Ascending aorta (tissue), 2 donors: ENCODE measurements at regions of chr6 and their contacts with region 1.

Region 1: DNA sequence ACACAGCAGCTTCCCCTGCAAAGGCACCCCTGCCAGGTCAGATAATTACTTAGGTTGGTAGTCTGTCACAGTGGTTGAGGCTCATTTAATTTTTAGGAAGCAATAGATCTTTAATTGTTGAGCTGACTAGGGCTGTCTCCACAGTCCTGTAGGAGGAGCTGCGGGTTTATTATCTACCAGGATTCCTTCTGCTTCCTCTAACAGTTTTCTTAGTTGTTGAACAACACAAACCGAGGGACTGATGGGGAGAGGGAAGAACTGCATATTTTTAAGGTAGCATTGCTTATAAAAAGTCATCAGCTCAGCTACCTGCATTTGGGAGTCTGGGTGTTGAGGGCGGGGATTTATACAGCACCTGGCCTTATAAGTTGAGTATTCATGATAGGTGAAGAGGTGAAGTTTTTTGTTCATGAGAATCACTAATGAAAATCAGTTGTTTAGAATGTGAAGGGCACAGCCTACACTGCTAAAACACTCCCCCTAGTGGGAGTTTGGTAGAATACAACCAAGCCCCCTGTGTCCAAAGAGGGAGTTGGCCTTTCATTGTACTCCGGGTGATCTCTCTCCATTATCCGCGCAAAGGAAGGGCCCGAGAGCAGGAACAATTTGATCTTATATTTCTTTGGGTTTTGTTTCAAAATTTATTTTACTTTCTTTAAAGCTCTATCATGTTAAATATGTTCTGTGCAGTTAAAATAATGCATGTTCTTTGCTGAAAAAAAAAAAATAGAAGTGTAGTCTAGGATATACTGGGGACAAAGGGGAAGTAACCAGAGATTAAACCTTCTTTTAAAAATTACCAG is 69.6 kb downstream of the SSR1 start:
- DNase-seq: no peak
- H3K4me3 ChIP-seq: no peak overlapping the region
- H3K27ac ChIP-seq: peak overlapping the region in 1 of 2 donors; percentile 23
- H3K4me1 ChIP-seq: no peaks in the 10 kb centered on the region
- H3K27me3 ChIP-seq: no peaks in the 10 kb centered on the region
- CTCF ChIP-seq: peak; percentile 57 to 87 (median 81)

Region 2: GRCh38 chr6:6676910-6677441 is 566.4 kb before region 1 on chr6:
- intact Hi-C with region 1: loop called (anchors 2 kb)
- DNase-seq: peak in 1 of 2 donors; percentile 85
- H3K4me3 ChIP-seq: no peak overlapping the region
- H3K27ac ChIP-seq: no peak overlapping the region
- H3K4me1 ChIP-seq: no peaks in the 10 kb centered on the region
- H3K27me3 ChIP-seq: no peaks in the 10 kb centered on the region
- CTCF ChIP-seq: peak; percentile 77 to 97 (median 94)

Region 3: GRCh38 chr6:6724539-6725467 is 518.6 kb before region 1 on chr6:
- intact Hi-C with region 1: loop called (anchors 2 kb)
- DNase-seq: no peak
- H3K4me3 ChIP-seq: peak overlapping the region; percentile 43 to 66
- H3K27ac ChIP-seq: peak overlapping the region; percentile 65 to 68
- H3K4me1 ChIP-seq: peaks cover 4 to 5% of the 10 kb centered on the region in 2 donors
- H3K27me3 ChIP-seq: no peaks in the 10 kb centered on the region
- CTCF ChIP-seq: peak; percentile 9 to 61 (median 52)

Region 4: GRCh38 chr6:7004581-7005297 is 238.6 kb before region 1 on chr6:
- intact Hi-C with region 1: no loop called
- DNase-seq: no peak
- H3K4me3 ChIP-seq: no peak overlapping the region
- H3K27ac ChIP-seq: no peak overlapping the region
- H3K4me1 ChIP-seq: no peaks in the 10 kb centered on the region
- H3K27me3 ChIP-seq: no peaks in the 10 kb centered on the region
- CTCF ChIP-seq: no peak

Region 5: DNA sequence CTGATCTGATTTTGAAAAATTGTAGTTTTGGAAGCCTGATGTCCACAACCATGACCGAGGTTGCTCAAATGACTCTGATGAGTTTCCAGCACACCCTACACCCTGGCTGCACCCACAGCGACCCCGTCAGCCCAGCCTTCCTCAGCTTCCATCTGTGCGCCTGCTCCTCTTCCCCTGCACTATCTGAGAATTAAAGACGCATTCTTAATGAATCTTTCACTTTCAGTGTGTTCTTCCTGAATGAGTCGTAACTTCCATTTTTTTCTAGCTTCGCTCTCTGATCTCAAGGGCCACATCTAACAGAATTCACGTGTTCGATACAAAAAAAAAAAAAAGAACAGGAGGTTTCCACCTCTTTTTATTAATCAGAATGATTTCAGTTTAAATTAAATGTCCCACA is 156.9 kb before region 1 on chr6:
- intact Hi-C with region 1: loop called (anchors 5 kb)
- DNase-seq: no peak
- H3K4me3 ChIP-seq: peak overlapping the region; percentile 28 to 53
- H3K27ac ChIP-seq: no peak overlapping the region
- H3K4me1 ChIP-seq: peaks cover 0 to 2% of the 10 kb centered on the region in 2 donors
- H3K27me3 ChIP-seq: no peaks in the 10 kb centered on the region
- CTCF ChIP-seq: no peak